ENCODE measurements at regions of chr15 and their contacts with region 1.

Region 1: GRCh38 chr15:100627789-100628395 is 25.5 kb downstream of the ASB7 start:
- DNase-seq: peak; percentile 79
- H3K4me3 ChIP-seq: no peak overlapping the region
- H3K27ac ChIP-seq: no peak overlapping the region
- H3K4me1 ChIP-seq: no peaks in the 10 kb centered on the region
- H3K27me3 ChIP-seq: no peaks in the 10 kb centered on the region
- CTCF ChIP-seq: peak; percentile 69 to 95 (median 88)
- POLR2A ChIP-seq: no peak

Region 2: DNA sequence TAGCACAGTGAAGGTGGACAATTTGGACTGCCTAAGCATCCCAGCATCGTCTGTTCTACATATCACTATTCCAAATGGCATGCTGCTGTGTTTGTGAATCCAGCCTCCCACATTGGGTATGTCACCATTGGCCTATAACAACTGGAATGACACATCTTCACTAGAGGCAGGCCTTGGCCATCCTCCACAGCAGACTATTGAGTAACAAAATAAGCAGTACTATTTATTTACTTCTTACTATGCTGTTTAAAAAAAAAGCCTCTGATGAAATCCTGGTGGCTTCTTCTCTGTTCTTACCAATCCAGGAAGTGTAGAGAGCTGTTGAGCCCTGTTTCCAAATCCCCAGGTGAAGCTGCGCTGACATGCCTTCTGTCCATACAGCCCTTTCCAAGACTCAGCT is 68.6 kb before region 1 on chr15:
- intact Hi-C with region 1: no loop called
- DNase-seq: peak; percentile 46
- H3K4me3 ChIP-seq: no peak overlapping the region
- H3K27ac ChIP-seq: no peak overlapping the region
- H3K4me1 ChIP-seq: no peaks in the 10 kb centered on the region
- H3K27me3 ChIP-seq: no peaks in the 10 kb centered on the region
- CTCF ChIP-seq: no peak
- POLR2A ChIP-seq: no peak

Region 3: DNA sequence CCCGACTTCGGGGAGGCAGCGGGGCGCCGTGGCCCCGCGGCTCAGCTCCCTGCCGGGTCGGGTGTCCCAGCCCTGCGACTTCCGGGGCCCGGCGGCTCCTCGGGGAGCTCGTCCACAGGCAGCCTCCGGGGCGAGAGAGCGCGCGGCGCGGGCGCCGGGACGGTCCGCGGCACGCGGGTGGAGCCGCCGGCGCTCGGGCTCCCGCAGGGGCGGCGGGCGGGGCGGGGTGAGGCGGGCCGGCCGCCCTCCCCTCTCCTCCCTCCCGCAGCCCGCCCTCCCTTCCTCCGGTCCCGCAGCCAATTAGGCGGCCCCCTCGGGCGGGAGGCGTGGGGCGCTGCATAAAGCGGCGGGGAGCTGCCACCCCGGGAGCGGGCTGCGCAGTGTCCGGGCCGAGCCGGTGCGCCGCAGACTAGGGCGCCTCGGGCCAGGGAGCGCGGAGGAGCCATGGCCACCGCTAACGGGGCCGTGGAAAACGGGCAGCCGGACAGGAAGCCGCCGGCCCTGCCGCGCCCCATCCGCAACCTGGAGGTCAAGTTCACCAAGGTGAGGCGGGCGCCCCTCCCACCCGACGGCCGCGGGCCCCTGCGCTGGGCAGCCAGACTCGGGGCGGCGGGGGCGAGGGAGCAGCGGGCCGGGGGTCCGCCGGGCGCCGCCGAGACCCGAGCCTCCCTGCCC is 251.7 kb after region 1 on chr15 and contains the start of gene ALDH1A3:
- intact Hi-C with region 1: loop called (anchors 2 kb)
- DNase-seq: peak; percentile 81
- H3K4me3 ChIP-seq: peak within 1 kb of the TSS; percentile 63 to 95
- H3K27ac ChIP-seq: peak within 1 kb of the TSS; percentile 87 to 98
- H3K4me1 ChIP-seq: no peaks in the 10 kb centered on the region
- H3K27me3 ChIP-seq: no peaks in the 10 kb centered on the region
- CTCF ChIP-seq: peak in 1 of 4 experiments; percentile 15
- POLR2A ChIP-seq: peak; percentile 84
- total RNA-seq, gene ALDH1A3: 240 to 347 TPM

Region 4: DNA sequence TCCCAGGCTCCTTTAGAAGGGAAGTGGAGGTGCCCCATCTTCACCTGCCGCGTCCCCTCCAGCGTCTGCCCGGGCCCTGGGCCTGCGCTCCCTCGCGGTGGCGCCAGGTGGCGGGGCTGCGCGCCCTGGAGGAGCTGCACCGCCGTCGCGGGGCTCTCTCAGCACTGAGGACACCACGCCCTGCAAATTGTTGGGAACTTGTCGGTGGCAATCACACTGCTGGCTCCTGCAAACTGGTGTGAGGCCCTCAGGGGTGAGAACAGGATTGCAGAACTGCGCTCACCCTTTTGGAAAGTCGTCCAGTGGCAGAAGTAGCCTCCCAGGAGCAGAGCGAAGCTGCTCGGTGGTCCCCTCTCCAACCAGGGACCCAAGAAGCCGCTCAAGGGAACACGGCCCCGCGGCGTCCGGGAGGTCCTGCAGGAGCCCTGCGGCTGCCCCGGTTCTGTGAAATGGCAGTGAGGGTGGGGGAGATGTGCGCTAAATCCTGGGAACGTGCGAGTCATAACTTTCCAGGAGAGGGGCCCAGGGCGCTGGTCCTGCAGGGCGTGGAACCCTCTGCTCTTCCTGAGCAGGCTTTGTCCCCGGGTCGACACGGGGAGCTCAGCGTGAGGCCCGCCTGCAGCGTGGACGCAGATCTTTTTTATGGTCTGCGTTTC is 290.3 kb after region 1 on chr15:
- intact Hi-C with region 1: loop called (anchors 5 kb)
- DNase-seq: peak; percentile 83
- H3K4me3 ChIP-seq: peak overlapping the region; percentile 63 to 70
- H3K27ac ChIP-seq: peak overlapping the region; percentile 82 to 86
- H3K4me1 ChIP-seq: peaks cover 11% of the 10 kb centered on the region
- H3K27me3 ChIP-seq: no peaks in the 10 kb centered on the region
- CTCF ChIP-seq: peak; percentile 88 to 98 (median 94)
- POLR2A ChIP-seq: peak; percentile 34

Region 5: DNA sequence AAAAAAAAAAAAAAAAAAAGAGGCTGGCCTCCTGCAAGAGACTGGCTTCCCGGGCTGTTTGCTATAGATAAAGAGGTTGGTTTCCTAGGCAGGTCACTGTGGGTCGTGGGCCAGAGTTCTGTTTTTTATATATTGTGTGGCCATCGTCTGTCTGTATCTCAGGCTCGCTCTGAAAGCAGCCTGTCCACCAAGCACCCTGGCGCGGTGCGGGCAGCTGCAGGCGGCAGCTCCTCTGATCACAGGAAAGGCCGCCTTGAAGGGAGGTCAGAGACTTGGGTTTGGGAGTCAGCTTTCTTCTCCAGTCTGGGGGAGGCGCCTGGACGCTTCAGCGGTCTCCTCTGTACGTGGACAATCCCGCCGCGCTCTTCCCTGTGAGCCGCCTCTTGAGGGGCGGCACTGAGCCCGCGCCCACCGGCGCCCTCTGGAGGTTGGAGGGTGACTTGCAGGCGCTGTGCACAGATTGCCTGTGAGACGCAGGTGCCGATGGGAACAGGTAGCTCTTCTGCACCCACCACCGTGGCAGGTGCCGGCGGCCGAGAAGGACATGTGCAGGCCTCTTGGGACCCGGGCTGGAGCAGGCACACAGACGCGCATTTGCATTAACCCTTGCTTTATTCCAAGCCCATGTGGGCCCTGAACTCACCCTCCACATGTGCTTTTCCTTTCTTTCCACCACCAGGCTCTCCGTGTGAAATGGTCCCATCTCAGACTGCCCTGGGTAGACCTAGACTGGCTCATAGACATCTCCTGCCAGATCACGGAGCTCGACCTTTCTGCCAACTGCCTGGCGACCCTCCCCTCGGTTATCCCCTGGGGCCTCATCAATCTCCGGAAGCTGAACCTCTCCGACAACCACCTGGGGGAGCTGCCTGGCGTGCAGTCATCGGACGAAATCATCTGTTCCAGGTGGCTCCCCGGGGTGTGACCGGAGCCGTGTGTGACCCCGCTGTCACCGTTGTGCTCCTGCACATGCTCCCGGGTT is 380.6 kb after region 1 on chr15:
- intact Hi-C with region 1: loop called (anchors 2 kb)
- DNase-seq: peak; percentile 83
- H3K4me3 ChIP-seq: peak overlapping the region; percentile 25 to 26
- H3K27ac ChIP-seq: peak overlapping the region in 1 of 2 donors; percentile 51
- H3K4me1 ChIP-seq: no peaks in the 10 kb centered on the region
- H3K27me3 ChIP-seq: no peaks in the 10 kb centered on the region
- CTCF ChIP-seq: peak; percentile 85 to 96 (median 94)
- POLR2A ChIP-seq: no peak

Region 6: DNA sequence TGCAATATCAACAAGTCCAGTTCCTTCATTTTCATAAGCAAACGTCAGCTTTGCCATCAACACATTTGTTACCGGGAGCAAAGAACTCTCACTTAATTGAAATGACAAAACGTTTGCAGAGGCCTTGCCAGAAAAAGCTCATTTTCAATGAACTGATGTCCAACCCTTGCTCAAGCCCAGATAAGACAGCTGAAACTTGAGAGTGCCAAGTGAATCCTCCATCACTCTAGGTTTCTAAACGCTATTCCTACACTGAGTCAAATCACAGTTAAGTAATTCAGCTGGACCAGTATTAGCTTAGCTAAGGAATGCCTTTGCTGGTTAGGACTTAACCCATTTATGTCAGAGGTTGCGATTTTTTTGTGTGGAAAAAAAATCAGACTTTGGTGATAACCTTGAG is 612.5 kb after region 1 on chr15:
- intact Hi-C with region 1: no loop called
- DNase-seq: no peak
- H3K4me3 ChIP-seq: no peak overlapping the region
- H3K27ac ChIP-seq: peak overlapping the region; percentile 30 to 32
- H3K4me1 ChIP-seq: peaks cover 35% of the 10 kb centered on the region
- H3K27me3 ChIP-seq: no peaks in the 10 kb centered on the region
- CTCF ChIP-seq: no peak
- POLR2A ChIP-seq: no peak

Region 7: GRCh38 chr15:101251830-101252820 is 624.2 kb after region 1 on chr15 and contains the start of gene CHSY1:
- intact Hi-C with region 1: loop called (anchors 10 kb)
- DNase-seq: peak; percentile 89
- H3K4me3 ChIP-seq: peak within 1 kb of the TSS; percentile 76
- H3K27ac ChIP-seq: peak within 1 kb of the TSS; percentile 84 to 88
- H3K4me1 ChIP-seq: peaks cover 3% of the 10 kb centered on the region
- H3K27me3 ChIP-seq: no peaks in the 10 kb centered on the region
- CTCF ChIP-seq: peak in 3 of 4 experiments; percentile 19 to 48 (median 45)
- POLR2A ChIP-seq: peak; percentile 85
- total RNA-seq, gene CHSY1: 30.4 to 46.4 TPM

Measured in prostate gland (tissue), 2 donors.